ENCODE measurements at regions of chr10 and their contacts with region 1.

Region 1: GRCh38 chr10:110547139-110547761 is 20.2 kb upstream of the SMC3 start:
- DNase-seq: peak in 2 of 4 donors; percentile 57 to 68
- ATAC-seq: peak; percentile 74
- H3K4me3 ChIP-seq: no peak overlapping the region
- H3K27ac ChIP-seq: no peak overlapping the region
- H3K4me1 ChIP-seq: peaks cover 0 to 21% of the 10 kb centered on the region in 2 donors
- H3K27me3 ChIP-seq: peaks cover 4 to 5% of the 10 kb centered on the region in 2 donors
- CTCF ChIP-seq: peak; percentile 74 to 82

Region 2: GRCh38 chr10:110311357-110311949 is 235.8 kb before region 1 on chr10:
- intact Hi-C with region 1: loop called in 1 of 2 experiments (anchors 5 kb)
- DNase-seq: peak in 1 of 4 donors; percentile 61
- ATAC-seq: peak; percentile 92
- H3K4me3 ChIP-seq: no peak overlapping the region
- H3K27ac ChIP-seq: no peak overlapping the region
- H3K4me1 ChIP-seq: peaks cover 0 to 28% of the 10 kb centered on the region in 2 donors
- H3K27me3 ChIP-seq: no peaks in the 10 kb centered on the region
- CTCF ChIP-seq: peak; percentile 39 to 58

Region 3: GRCh38 chr10:110354322-110354766 is 192.9 kb before region 1 on chr10:
- intact Hi-C with region 1: loop called in 1 of 2 experiments (anchors 5 kb)
- DNase-seq: peak in 2 of 4 donors; percentile 69 to 70
- ATAC-seq: peak; percentile 80
- H3K4me3 ChIP-seq: no peak overlapping the region
- H3K27ac ChIP-seq: no peak overlapping the region
- H3K4me1 ChIP-seq: peaks cover 0 to 27% of the 10 kb centered on the region in 2 donors
- H3K27me3 ChIP-seq: no peaks in the 10 kb centered on the region
- CTCF ChIP-seq: peak; percentile 55 to 59

Region 4: DNA sequence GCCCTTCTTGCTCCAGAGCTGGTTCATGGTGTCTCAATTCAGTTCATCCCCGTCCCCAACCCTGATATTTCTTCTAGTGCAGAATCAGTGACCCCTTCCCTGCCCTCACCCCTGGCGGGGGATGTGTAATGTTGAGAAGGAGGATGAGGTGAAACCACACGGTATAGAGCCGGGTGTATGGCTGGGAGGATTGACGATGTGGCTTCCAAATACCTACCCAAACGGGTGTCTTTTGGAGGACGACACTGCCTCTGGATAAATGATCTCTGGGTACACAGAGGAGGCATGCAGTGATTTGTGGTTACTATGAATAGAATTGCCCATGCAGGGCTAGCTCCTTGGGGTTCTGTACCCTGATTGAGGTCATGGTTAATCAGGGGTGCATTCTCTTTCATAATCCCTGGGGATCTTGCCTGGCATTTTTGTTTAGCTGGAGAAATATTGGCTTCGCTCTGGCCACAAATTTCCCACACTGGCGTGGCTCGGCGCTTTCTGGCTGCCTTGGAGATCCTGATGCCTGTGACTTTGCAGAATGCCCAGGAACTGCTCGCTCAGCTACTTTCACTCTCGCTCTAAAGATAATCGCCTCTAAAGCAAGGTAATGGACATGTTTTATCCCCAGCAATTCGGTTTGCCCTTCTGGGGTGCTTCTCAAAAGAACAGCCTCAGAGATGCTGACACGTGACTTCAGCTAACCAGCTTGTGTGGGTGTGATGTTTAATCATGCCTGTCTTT is 186.1 kb after region 1 on chr10:
- intact Hi-C with region 1: no loop called
- DNase-seq: no peak
- ATAC-seq: no peak
- H3K4me3 ChIP-seq: no peak overlapping the region
- H3K27ac ChIP-seq: no peak overlapping the region
- H3K4me1 ChIP-seq: no peaks in the 10 kb centered on the region
- H3K27me3 ChIP-seq: peaks cover 0 to 55% of the 10 kb centered on the region in 2 donors
- CTCF ChIP-seq: no peak

Region 5: DNA sequence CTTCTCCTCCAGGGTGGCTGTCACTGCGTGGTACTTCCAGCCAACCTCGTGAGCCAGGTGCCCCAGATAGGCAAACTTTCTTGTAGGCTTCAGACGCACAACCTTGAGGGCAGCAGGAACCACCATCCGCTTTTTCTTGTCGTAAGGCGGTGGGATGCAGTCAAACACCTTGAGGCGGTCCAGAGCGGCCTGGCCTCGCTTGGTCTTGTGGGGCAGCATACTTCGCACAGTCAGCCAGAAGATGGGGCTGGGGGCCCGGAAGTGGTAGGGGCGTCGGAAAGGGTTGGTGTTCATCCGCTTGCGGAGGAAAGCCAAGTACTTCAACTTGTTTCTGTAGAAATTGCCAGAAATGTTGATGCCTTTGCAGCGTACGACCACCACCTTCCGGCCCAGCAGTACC is 389.5 kb after region 1 on chr10:
- intact Hi-C with region 1: no loop called
- DNase-seq: no peak
- ATAC-seq: no peak
- H3K4me3 ChIP-seq: no peak overlapping the region
- H3K27ac ChIP-seq: no peak overlapping the region
- H3K4me1 ChIP-seq: peaks cover 0 to 17% of the 10 kb centered on the region in 2 donors
- H3K27me3 ChIP-seq: no peaks in the 10 kb centered on the region
- CTCF ChIP-seq: no peak

Measured in left lung (tissue), 14 donors.